PC-9 (cell line): ENCODE measurements at regions of chr22 and their contacts with region 1.

Region 1: GRCh38 chr22:31561238-31561887 is 65.0 kb downstream of the SFI1 start:
- DNase-seq: peak; percentile 67 to 82
- H3K4me3 ChIP-seq: no peak overlapping the region
- H3K27ac ChIP-seq: no peak overlapping the region
- H3K4me1 ChIP-seq: no peaks in the 10 kb centered on the region
- H3K27me3 ChIP-seq: no peaks in the 10 kb centered on the region
- CTCF ChIP-seq: peak; percentile 90

Region 2: GRCh38 chr22:31477329-31477728 is 84.0 kb before region 1 on chr22:
- CTCF ChIA-PET with region 1: no interaction called
- POLR2A ChIA-PET with region 1: no interaction called
- intact Hi-C with region 1: no loop called
- DNase-seq: no peak
- H3K4me3 ChIP-seq: no peak overlapping the region
- H3K27ac ChIP-seq: no peak overlapping the region
- H3K4me1 ChIP-seq: no peaks in the 10 kb centered on the region
- H3K27me3 ChIP-seq: no peaks in the 10 kb centered on the region
- CTCF ChIP-seq: no peak

Region 3: DNA sequence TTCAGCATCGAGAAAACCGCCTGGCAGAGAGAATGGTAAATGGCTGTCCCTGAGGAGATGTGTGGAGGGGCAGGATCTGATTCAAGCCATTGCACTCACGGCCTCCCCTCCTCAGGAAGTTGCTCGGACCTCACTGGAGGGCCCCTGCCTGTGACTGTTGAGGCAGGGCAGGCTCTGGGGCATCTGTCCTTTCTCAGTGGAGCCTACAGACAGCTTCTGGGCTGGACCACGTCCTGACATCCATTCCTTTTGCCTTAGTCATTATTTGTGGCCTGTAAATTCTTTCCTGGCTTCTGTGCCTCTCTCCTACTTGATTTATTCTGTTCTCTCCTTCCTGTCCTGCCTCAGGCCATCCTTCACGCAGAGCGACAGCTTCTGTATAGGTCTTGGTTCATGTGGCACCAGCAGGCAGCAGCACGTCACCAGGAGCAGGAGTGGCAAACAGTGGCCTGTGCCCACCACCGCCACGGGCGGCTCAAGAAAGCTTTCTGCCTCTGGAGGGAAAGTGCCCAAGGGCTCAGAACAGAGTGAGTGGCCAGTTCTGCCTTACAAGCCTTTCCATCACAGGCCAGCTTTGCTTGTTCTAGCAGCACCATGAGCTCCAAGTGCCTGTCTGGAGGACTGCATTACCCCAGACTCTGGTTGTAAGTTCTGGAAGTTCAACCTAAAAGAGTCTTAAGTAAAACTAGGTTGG is 41.0 kb after region 1 on chr22:
- CTCF ChIA-PET with region 1: no interaction called
- POLR2A ChIA-PET with region 1: no interaction called
- intact Hi-C with region 1: loop called (anchors 5 kb)
- DNase-seq: peak; percentile 73 to 90
- H3K4me3 ChIP-seq: no peak overlapping the region
- H3K27ac ChIP-seq: peak overlapping the region; percentile 30
- H3K4me1 ChIP-seq: peaks cover 19% of the 10 kb centered on the region
- H3K27me3 ChIP-seq: no peaks in the 10 kb centered on the region
- CTCF ChIP-seq: no peak

Region 4: GRCh38 chr22:31630331-31631329 is 69.3 kb after region 1 on chr22:
- CTCF ChIA-PET with region 1: interaction called, 11 read pairs
- POLR2A ChIA-PET with region 1: no interaction called
- intact Hi-C with region 1: loop called (anchors 1 kb)
- DNase-seq: peak; percentile 78 to 95
- H3K4me3 ChIP-seq: peak overlapping the region; percentile 84
- H3K27ac ChIP-seq: peak overlapping the region; percentile 51
- H3K4me1 ChIP-seq: peaks cover 39% of the 10 kb centered on the region
- H3K27me3 ChIP-seq: no peaks in the 10 kb centered on the region
- CTCF ChIP-seq: no peak; the same call in 1 of the 2 replicates

Region 5: DNA sequence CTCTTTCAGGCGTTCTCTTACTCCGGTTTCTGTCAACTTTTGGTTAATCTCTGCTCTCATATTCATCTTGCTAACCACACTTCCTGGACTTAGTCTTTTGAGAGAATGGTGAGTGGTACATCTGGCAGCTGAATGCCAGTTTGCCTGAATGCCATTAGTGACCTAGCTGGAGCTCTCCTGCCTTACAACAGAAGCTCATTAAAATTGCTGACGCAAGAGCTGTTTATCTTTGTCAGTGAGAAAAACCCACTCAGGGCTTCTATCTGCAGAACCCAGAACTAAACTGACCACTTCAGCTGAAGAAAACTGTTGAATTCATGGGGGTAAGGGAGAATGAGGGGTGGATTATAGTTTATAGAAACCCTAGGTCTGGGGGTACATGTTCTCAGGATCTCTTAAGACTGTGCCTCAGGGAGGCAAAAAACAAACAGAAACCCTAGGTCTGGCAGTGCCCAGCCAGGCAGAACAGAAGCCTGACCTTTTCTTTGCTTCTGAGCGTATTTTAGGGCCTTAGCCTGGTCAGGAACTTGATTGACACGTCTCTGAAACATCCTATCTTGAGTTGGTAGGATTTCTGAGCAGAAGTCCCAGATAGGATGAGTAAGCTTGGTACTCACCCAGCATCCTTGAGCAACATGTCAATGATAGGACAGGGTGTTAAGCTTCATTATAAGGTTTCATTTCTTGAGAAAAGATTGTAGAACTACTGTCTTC is 330.2 kb after region 1 on chr22:
- CTCF ChIA-PET with region 1: interaction called, 11 read pairs
- POLR2A ChIA-PET with region 1: no interaction called
- intact Hi-C with region 1: no loop called
- DNase-seq: no peak
- H3K4me3 ChIP-seq: no peak overlapping the region
- H3K27ac ChIP-seq: 0 out of 2 replicates have a peak overlapping the region, but pooled peaks have one; percentile 1
- H3K4me1 ChIP-seq: no peaks in the 10 kb centered on the region
- H3K27me3 ChIP-seq: no peaks in the 10 kb centered on the region
- CTCF ChIP-seq: no peak

Region 6: DNA sequence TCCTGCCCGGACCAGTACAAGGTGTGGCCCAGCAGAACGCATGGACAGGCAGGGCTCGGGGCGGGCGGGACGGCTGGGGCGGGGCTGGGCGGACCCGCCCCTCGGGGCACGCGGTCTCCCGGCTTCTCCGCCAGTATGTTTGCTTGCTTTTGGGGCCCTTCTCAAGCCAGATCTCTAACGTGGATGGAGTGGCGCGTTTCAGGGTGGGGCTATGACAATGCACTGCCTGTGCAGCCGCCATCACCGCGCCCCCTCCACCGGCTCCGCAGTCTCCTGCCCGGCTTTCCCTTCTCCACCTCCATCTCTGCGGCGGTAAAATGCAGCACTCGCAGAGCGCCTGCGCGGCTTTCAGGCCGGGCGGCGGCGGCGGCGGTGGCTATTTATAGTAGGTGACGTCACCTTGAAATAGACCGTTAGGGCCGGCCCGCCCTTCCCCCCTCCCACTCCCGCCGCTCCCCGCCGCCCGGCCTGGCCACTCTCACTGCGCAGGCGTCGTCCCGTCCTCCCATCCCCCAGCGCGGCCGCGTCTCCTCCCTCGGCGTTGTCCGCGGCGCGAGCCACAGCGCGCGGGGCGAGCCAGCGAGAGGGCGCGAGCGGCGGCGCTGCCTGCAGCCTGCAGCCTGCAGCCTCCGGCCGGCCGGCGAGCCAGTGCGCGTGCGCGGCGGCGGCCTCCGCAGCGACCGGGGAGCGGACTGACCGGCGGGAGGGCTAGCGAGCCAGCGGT is 382.8 kb after region 1 on chr22 and contains the start of gene YWHAH:
- CTCF ChIA-PET with region 1: no interaction called
- POLR2A ChIA-PET with region 1: no interaction called
- intact Hi-C with region 1: loop called (anchors 10 kb)
- DNase-seq: peak; percentile 76 to 95
- H3K4me3 ChIP-seq: peak within 1 kb of the TSS; percentile 99
- H3K27ac ChIP-seq: peak within 1 kb of the TSS; percentile 53
- H3K4me1 ChIP-seq: peaks cover 20% of the 10 kb centered on the region
- H3K27me3 ChIP-seq: no peaks in the 10 kb centered on the region
- CTCF ChIP-seq: no peak
- total RNA-seq, gene YWHAH: 131 and 132 TPM in 2 replicates